ENCODE measurements at regions of chr12 and their contacts with region 1.

Region 1: DNA sequence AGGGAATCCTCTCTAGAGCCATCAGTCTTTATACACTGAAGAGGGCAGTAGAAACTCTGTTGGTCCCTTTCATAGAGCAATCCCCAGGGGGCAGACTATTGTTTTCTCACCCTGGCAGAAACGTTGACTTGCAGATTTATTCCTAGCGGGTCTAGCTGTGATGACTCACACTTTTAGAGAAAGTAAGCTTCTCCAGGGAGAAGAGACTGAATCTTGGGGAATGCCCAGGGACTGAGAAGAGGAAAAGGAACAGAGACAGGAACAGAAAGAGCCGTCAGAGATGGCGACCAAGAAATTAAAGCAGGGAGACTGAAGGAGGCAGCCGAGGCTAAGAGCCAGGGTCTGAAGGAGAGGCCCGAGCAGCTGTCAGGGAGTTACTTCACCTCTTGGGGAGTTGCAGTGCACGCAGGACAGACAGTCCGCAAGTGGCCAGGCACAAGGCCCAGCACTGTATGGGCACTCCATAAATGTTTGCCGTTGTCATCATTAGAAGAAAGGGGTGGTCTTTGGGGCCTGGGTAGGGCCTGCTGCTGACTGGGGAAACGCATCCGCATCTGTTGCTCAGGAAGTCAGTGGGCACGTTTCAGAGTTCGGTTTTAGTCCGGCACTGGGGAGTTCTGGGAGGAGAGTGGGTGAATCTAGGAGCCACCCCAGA is 13.0 kb downstream of the PLEKHG6 start:
- DNase-seq: peak in 1 of 2 donors; percentile 85
- ATAC-seq: peak; percentile 41 to 76 (median 64)
- H3K4me3 ChIP-seq: peak overlapping the region in 7 of 10 donors; percentile 3 to 30 (median 25)
- H3K27ac ChIP-seq: peak overlapping the region in 9 of 10 donors; percentile 71 to 88 (median 83)
- H3K4me1 ChIP-seq: peaks cover 20 to 70% (median 65%) of the 10 kb centered on the region in 9 donors
- H3K27me3 ChIP-seq: no peaks in the 10 kb centered on the region
- CTCF ChIP-seq: peak; percentile 6 to 71 (median 54)

Region 2: GRCh38 chr12:6335451-6336078 is 12.1 kb after region 1 on chr12:
- intact Hi-C with region 1: loop called in 1 of 10 experiments (anchors 1 kb)
- DNase-seq: peak; percentile 68 to 77
- ATAC-seq: peak; percentile 39 to 63 (median 58)
- H3K4me3 ChIP-seq: peak overlapping the region in 9 of 10 donors; percentile 30 to 99 (median 95)
- H3K27ac ChIP-seq: peak overlapping the region; percentile 88 to 100 (median 97)
- H3K4me1 ChIP-seq: peaks cover 42 to 96% (median 78%) of the 10 kb centered on the region in 9 donors
- H3K27me3 ChIP-seq: no peaks in the 10 kb centered on the region
- CTCF ChIP-seq: peak; percentile 14 to 71 (median 50)

Region 3: DNA sequence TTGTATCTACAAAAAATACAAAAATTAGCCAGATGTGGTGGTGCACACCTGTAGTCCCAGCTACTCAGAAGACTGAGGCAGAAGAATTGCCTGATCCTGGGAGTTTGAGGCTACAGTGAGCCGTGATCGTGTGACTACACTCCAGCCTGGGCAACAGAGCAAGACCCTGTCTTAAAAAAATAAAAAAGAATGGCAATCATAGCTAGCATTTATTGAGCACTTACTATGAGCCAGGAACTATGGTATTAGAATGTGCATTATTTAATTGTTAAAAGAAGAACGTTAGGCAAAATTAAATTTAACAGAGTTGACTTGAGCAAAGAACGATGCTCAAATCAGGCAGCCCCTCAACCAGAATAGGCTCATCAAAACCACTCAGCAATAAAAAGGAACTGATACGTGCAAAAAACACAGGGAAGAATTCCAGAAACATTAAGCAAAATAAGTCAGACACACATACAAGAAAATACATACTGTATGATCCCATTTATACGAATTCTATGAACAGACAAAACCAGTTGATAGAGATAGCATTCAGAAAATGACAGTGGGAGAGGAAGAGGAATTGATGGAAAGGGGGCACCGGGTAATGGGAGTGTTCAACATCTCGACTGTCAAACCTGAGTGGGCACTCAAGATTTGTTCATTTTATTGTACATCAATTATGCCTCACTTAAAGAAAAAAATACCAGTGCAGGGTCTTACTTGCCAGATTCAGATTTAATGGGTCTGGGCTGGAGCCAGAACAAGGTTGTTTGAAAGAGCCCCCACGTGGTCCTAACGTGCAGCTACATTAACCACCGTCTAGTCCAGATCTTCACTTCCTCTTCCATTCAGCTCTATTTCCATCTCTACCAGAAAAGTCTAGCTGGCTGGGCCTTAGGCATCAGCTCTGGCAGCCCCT is 43.9 kb after region 1 on chr12:
- intact Hi-C with region 1: loop called in 2 of 10 experiments (anchors 5 to 10 kb)
- DNase-seq: no peak
- ATAC-seq: no peak
- H3K4me3 ChIP-seq: no peak overlapping the region
- H3K27ac ChIP-seq: peak overlapping the region in 5 of 10 donors; percentile 2 to 77 (median 23)
- H3K4me1 ChIP-seq: peaks cover 0 to 56% (median 16%) of the 10 kb centered on the region in 9 donors
- H3K27me3 ChIP-seq: no peaks in the 10 kb centered on the region
- CTCF ChIP-seq: peak in 7 of 9 donors; percentile 9 to 56 (median 44)

Region 4: GRCh38 chr12:6376079-6376869 is 52.8 kb after region 1 on chr12:
- intact Hi-C with region 1: loop called in 1 of 10 experiments (anchors 10 kb)
- DNase-seq: no peak
- ATAC-seq: peak; percentile 65 to 84 (median 77)
- H3K4me3 ChIP-seq: no peak overlapping the region
- H3K27ac ChIP-seq: peak overlapping the region in 9 of 10 donors; percentile 19 to 62 (median 41)
- H3K4me1 ChIP-seq: peaks cover 10 to 65% (median 23%) of the 10 kb centered on the region in 9 donors
- H3K27me3 ChIP-seq: no peaks in the 10 kb centered on the region
- CTCF ChIP-seq: peak in 6 of 9 donors; percentile 34 to 51 (median 41)

Region 5: DNA sequence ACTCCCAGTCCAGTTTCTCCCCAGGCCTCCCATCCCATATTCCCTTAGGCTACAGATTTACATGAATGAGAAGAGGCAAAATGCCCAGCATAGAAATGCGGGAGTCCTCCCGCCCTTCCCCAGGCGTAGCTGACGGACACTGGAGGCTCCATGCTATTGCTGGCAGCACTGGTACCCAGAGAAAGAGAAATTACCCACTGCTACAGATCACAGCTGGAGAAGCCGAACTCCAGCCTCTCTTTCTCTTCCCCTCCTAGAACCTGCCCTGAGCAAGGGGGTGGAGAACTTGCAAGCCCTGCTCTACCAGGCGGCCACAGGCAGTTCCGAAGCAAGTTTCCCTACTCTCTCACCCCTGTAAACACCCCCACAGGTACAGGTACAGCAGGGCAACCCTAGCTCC is 64.1 kb after region 1 on chr12:
- intact Hi-C with region 1: no loop called
- DNase-seq: no peak
- ATAC-seq: no peak
- H3K4me3 ChIP-seq: no peak overlapping the region
- H3K27ac ChIP-seq: no peak overlapping the region
- H3K4me1 ChIP-seq: peaks cover 7 to 58% (median 36%) of the 10 kb centered on the region in 9 donors
- H3K27me3 ChIP-seq: no peaks in the 10 kb centered on the region
- CTCF ChIP-seq: no peak

Region 6: DNA sequence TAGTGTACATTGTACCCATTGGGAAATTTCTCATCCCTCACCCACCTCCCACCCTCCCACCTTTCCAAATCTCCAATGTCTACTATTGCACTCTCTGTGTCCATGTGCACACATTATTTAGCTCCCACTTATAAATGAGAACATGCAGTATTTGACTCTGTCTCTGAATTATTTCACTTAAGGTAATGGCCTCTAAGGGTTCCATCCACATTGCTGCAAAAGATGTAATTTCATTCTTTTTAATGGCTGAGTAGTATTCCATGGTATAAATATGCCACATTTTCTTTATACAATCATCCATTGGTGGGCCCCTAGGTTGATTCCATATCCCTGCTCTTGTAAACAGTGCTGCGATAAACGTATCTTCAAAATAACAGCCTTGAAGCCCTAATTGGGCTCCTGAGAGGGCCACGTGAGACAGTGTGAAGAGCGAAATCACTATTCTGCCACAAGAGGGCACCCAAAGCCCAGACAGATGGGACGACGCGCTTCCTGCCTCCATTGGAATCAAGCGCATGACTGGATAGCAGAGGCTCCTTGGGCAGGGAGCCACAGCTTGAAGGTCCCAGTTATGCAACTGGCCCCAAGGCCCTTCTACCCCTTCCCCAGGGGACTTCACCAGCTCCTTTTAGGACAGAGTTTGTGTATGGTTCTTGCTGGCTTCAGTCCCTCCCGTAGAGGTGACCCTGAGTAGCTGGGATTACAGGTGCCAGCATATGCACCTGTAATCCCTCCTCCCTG is 100.0 kb after region 1 on chr12:
- intact Hi-C with region 1: loop called in 1 of 10 experiments (anchors 2 kb)
- DNase-seq: peak; percentile 73 to 86
- ATAC-seq: peak; percentile 91 to 99 (median 98)
- H3K4me3 ChIP-seq: no peak overlapping the region
- H3K27ac ChIP-seq: peak overlapping the region in 2 of 10 donors; percentile 26 to 36
- H3K4me1 ChIP-seq: peaks cover 0 to 21% (median 6%) of the 10 kb centered on the region in 9 donors
- H3K27me3 ChIP-seq: no peaks in the 10 kb centered on the region
- CTCF ChIP-seq: peak; percentile 84 to 95 (median 92)

Region 7: DNA sequence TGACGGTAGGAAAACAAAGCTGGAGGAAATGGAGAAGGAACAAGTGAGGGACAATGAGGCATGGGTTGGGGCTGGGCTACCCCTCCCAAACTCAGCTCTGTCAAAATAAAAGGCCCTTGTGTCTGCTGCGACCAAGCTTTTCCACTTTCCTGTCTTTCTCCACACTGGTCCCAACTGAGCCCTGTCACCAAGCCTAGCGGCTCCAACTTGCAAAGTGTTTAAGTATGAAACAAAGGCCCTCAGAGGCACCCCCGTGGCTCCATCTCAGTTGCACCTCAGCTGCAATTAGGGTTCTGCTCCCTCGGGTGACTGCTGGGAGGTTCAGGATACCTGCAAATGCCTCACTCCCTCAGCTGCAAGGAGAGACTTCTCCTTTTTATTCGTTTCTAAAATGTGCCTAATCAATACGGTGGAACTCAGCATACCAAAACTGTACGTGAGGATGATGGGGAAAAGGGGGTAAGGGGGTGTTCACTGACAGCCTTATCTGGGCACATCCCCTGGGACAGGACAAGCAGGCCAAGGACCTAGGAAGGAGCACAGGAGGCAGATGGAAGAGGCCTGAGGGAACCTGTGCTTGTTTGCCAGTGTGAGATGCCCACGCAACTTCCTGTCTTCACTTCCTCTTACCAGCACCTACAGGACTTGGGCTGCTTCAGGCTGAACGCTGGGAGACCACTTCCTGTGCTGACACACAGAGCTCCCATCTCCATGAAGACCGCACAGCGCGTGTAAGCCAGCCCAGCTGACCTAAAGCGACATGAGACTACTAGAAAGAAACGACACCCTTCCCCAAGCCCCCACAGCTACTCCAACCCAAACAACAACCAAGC is 138.2 kb after region 1 on chr12:
- intact Hi-C with region 1: loop called in 5 of 10 experiments (anchors 2 to 10 kb)
- DNase-seq: no peak
- ATAC-seq: peak; percentile 25 to 61 (median 35)
- H3K4me3 ChIP-seq: peak overlapping the region in 1 of 10 donors; percentile 22
- H3K27ac ChIP-seq: peak overlapping the region in 9 of 10 donors; percentile 39 to 89 (median 56)
- H3K4me1 ChIP-seq: peaks cover 0 to 71% (median 12%) of the 10 kb centered on the region in 9 donors
- H3K27me3 ChIP-seq: no peaks in the 10 kb centered on the region
- CTCF ChIP-seq: no peak

Region 8: GRCh38 chr12:6470375-6471163 is 147.1 kb after region 1 on chr12 and contains the start of gene VAMP1:
- intact Hi-C with region 1: loop called in 3 of 10 experiments (anchors 2 to 10 kb)
- DNase-seq: peak; percentile 97 to 98
- ATAC-seq: peak; percentile 97 to 99 (median 98)
- H3K4me3 ChIP-seq: peak within 1 kb of the TSS; percentile 60 to 78 (median 72)
- H3K27ac ChIP-seq: peak within 1 kb of the TSS; percentile 16 to 93 (median 86)
- H3K4me1 ChIP-seq: peaks cover 4 to 45% (median 21%) of the 10 kb centered on the region in 9 donors
- H3K27me3 ChIP-seq: no peaks in the 10 kb centered on the region
- CTCF ChIP-seq: peak in 2 of 9 donors; percentile 9 to 16
- total RNA-seq, gene VAMP1: 1.4 to 6.1 (median 3.0) TPM

Measured in heart right ventricle (tissue), 16 donors.